A673 (cell line): ENCODE measurements at regions of chr1 and their contacts with region 1.

Region 1: DNA sequence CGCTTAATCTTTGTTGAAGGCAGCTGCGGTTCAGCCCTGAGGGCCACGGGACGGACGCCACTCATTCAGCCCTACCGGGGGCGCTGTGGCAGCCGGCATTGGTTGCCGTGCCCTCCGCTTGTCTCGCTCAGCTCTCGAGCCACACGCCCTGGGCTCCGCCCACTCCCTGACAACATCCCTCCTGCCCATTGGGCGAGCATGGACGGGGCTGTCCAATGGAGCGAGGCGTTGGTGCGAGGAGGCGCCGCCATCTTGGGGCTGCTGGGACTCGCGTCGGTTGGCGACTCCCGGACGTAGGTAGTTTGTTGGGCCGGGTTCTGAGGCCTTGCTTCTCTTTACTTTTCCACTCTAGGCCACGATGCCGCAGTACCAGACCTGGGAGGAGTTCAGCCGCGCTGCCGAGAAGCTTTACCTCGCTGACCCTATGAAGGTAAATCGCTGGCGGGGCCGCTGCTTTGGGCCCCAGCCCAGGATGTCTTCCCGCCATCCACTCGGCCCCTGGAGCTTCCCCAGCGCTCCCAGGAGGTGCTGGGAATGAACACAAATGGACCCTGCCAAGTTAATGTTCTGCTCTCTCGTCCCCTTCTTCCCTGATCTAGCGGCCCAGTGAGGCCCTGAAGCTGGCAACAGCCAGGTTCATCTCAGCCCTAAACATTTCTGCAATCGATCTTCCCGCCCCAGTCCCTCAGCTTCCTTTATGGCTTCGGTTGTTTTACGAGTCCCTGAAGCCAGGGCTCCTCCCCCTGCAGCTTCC is at the start of gene SRP9:
- DNase-seq: peak; percentile 100
- H3K4me3 ChIP-seq: peak within 1 kb of the TSS; percentile 71
- H3K27ac ChIP-seq: peak within 1 kb of the TSS; percentile 91
- H3K4me1 ChIP-seq: peaks cover 35% of the 10 kb centered on the region
- H3K27me3 ChIP-seq: no peaks in the 10 kb centered on the region
- CTCF ChIP-seq: peak; percentile 97
- total RNA-seq, gene SRP9: 486 and 491 TPM in 2 replicates

Region 2: DNA sequence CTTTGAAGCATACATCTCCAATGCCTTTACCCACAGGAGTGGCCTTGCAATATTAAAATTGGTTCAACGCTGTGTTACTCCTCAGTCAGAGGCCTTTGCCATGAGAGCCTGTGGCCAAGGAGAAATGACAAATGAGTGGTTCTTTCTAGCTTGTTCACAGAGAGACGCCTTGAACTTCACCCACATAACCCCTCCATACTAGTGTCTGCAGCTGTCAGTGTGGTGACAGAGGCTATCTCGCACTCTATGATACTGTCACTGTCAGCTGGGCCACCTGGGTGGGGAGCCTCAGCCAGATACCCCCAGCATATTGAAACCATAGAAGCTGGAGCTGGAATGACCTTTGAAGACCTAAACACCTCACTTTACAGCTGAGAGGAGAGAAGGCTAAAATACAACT is 292.5 kb before region 1 on chr1:
- CTCF ChIA-PET with region 1: interaction called, 10 read pairs
- POLR2A ChIA-PET with region 1: no interaction called
- intact Hi-C with region 1: no loop called
- DNase-seq: no peak
- H3K4me3 ChIP-seq: no peak overlapping the region
- H3K27ac ChIP-seq: no peak overlapping the region
- H3K4me1 ChIP-seq: no peaks in the 10 kb centered on the region
- H3K27me3 ChIP-seq: no peaks in the 10 kb centered on the region
- CTCF ChIP-seq: no peak

Region 3: DNA sequence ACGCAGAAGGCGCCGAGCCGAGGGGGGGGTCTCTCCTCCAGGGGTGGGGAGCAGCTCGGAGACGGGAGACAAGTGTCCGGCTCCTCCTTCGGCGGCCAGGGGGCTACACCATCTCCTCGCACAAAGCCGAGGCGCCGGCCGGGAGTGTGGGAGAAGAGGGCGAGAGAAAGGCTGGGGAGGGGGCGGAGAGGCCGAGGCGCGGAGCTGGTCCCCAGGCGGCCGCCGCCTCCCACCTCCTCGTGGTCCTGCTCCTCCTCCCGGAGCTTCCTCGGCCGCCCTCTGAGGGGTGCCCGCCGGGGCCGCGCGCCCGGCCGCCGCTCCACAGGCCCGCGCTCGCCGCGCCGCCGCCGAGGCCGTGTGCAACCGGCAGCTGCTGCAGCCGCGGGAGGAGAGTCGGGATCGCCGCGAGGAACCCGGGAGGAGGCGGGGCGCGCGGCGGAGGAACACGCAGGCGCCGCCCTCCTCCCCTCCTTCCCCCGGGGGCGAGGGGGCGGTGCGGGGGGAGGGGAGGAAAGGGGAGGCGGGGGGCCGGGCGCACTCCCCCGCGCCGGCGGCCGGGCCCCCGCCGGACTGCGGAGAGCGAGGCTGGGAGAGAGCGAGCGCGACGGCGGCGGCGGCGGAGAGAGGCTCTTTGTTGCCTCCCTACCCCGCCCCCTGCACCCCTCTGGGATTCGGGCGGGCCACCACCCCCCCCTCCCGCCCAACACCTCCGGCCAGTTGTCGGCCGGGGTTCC is 124.9 kb before region 1 on chr1 and contains the start of gene ENAH:
- CTCF ChIA-PET with region 1: interaction called, 4 read pairs
- POLR2A ChIA-PET with region 1: no interaction called
- intact Hi-C with region 1: loop called (anchors 5 kb)
- DNase-seq: peak; percentile 92
- H3K4me3 ChIP-seq: peak within 1 kb of the TSS; percentile 85
- H3K27ac ChIP-seq: peak within 1 kb of the TSS; percentile 96
- H3K4me1 ChIP-seq: peaks cover 41% of the 10 kb centered on the region
- H3K27me3 ChIP-seq: no peaks in the 10 kb centered on the region
- CTCF ChIP-seq: no peak
- total RNA-seq, gene ENAH: 171 and 186 TPM in 2 replicates

Region 4: GRCh38 chr1:225845571-225846259 is 68.0 kb after region 1 on chr1:
- CTCF ChIA-PET with region 1: interaction called, 4 read pairs
- POLR2A ChIA-PET with region 1: no interaction called
- intact Hi-C with region 1: loop called (anchors 5 kb)
- DNase-seq: peak; percentile 87
- H3K4me3 ChIP-seq: no peak overlapping the region
- H3K27ac ChIP-seq: no peak overlapping the region
- H3K4me1 ChIP-seq: no peaks in the 10 kb centered on the region
- H3K27me3 ChIP-seq: no peaks in the 10 kb centered on the region
- CTCF ChIP-seq: peak; percentile 85

Region 5: GRCh38 chr1:226135059-226135651 is 357.4 kb after region 1 on chr1:
- CTCF ChIA-PET with region 1: no interaction called
- POLR2A ChIA-PET with region 1: no interaction called
- intact Hi-C with region 1: no loop called
- DNase-seq: no peak
- H3K4me3 ChIP-seq: no peak overlapping the region
- H3K27ac ChIP-seq: no peak overlapping the region
- H3K4me1 ChIP-seq: no peaks in the 10 kb centered on the region
- H3K27me3 ChIP-seq: no peaks in the 10 kb centered on the region
- CTCF ChIP-seq: no peak